ENCODE measurements at regions of chr5 and their contacts with region 1.

Region 1: GRCh38 chr5:13910637-13911288 is 33.7 kb downstream of the DNAH5 start:
- DNase-seq: no peak
- H3K4me3 ChIP-seq: no peak overlapping the region
- H3K27ac ChIP-seq: no peak overlapping the region
- H3K4me1 ChIP-seq: no peaks in the 10 kb centered on the region
- H3K27me3 ChIP-seq: no peaks in the 10 kb centered on the region
- CTCF ChIP-seq: no peak

Region 2: DNA sequence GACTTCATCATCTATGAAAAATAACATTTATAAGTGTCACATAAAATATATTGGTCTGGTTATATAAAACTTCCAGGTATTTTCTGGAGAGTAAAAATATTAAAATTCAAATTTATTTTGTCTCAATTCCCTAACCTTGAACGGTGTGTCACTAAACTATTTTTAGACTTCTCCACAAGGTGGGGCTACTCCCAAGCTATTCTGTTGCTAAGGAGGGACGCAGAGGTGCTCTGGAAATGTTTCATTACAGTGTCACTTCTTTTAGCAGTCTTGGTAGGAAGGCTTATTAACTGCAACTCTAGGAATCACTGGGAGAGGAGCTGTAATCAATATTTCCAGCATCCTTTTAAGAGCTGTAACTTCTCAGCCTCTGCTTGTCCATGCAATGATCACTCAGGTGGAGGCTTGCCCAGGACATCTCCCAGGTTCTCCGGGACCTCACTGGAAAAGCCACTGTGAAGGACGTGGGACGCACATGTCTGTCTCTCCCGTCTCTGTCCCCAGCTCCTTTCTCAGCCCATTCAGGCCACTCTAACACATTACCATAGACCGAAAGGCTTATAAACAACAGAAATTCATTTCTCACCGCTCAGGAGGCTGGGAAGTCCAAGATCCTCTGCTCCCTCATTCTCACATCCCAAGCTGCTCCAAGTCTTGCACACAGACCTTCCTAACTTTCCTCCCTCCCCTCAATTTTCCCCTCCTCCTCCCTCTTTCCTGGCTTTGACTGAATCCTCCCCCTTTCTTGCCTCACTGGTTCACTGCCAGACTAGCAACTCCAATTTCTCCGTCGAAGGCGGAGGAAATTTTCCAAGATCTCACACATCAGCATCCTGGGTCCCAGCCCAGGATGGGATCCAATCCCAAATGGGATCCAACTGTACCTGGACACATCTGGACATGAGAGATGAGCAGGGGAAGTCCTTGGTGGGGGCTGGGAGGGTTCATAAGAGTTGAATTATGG is 66.4 kb after region 1 on chr5:
- CTCF ChIA-PET with region 1: no interaction called
- POLR2A ChIA-PET with region 1: no interaction called
- intact Hi-C with region 1: no loop called
- DNase-seq: peak; percentile 62 to 67
- H3K4me3 ChIP-seq: no peak overlapping the region
- H3K27ac ChIP-seq: no peak overlapping the region
- H3K4me1 ChIP-seq: no peaks in the 10 kb centered on the region
- H3K27me3 ChIP-seq: no peaks in the 10 kb centered on the region
- CTCF ChIP-seq: peak; percentile 85

Region 3: GRCh38 chr5:14234219-14234618 is 323.5 kb after region 1 on chr5:
- CTCF ChIA-PET with region 1: no interaction called
- POLR2A ChIA-PET with region 1: no interaction called
- intact Hi-C with region 1: no loop called
- DNase-seq: peak; percentile 93
- H3K4me3 ChIP-seq: no peak overlapping the region
- H3K27ac ChIP-seq: peak overlapping the region; percentile 73
- H3K4me1 ChIP-seq: peaks cover 40% of the 10 kb centered on the region
- H3K27me3 ChIP-seq: no peaks in the 10 kb centered on the region
- CTCF ChIP-seq: no peak

Region 4: GRCh38 chr5:14879937-14880589 is 969.3 kb after region 1 on chr5:
- CTCF ChIA-PET with region 1: no interaction called
- POLR2A ChIA-PET with region 1: interaction called, 11 read pairs
- intact Hi-C with region 1: no loop called
- DNase-seq: no peak
- H3K4me3 ChIP-seq: no peak overlapping the region
- H3K27ac ChIP-seq: no peak overlapping the region
- H3K4me1 ChIP-seq: no peaks in the 10 kb centered on the region
- H3K27me3 ChIP-seq: no peaks in the 10 kb centered on the region
- CTCF ChIP-seq: no peak

Measured in PC-9 (cell line).